ENCODE measurements at regions of chrX and their contacts with region 1.

Region 1: GRCh38 chrX:24259544-24260240 is 54.2 kb downstream of the SUPT20HL2 start:
- DNase-seq: no peak
- ATAC-seq: no peak
- H3K4me3 Mint-ChIP-seq: no peak overlapping the region
- H3K27ac Mint-ChIP-seq: no peak overlapping the region
- H3K4me1 Mint-ChIP-seq: peaks cover 8% of the 10 kb centered on the region
- H3K27me3 Mint-ChIP-seq: no peaks in the 10 kb centered on the region
- CTCF ChIP-seq: no peak

Region 2: GRCh38 chrX:23656684-23657083 is 603.0 kb before region 1 on chrX:
- CTCF ChIA-PET with region 1: no interaction called
- POLR2A ChIA-PET with region 1: no interaction called
- intact Hi-C with region 1: no loop called
- DNase-seq: no peak
- ATAC-seq: no peak
- H3K4me3 Mint-ChIP-seq: no peak overlapping the region
- H3K27ac Mint-ChIP-seq: no peak overlapping the region
- H3K4me1 Mint-ChIP-seq: peaks cover 21% of the 10 kb centered on the region
- H3K27me3 Mint-ChIP-seq: no peaks in the 10 kb centered on the region
- CTCF ChIP-seq: no peak

Region 3: GRCh38 chrX:24245201-24245600 is 14.5 kb before region 1 on chrX:
- CTCF ChIA-PET with region 1: no interaction called
- POLR2A ChIA-PET with region 1: no interaction called
- intact Hi-C with region 1: no loop called
- DNase-seq: no peak
- ATAC-seq: no peak
- H3K4me3 Mint-ChIP-seq: no peak overlapping the region
- H3K27ac Mint-ChIP-seq: no peak overlapping the region
- H3K4me1 Mint-ChIP-seq: peaks cover 15% of the 10 kb centered on the region
- H3K27me3 Mint-ChIP-seq: no peaks in the 10 kb centered on the region
- CTCF ChIP-seq: no peak

Region 4: GRCh38 chrX:24371391-24371972 is 111.8 kb after region 1 on chrX:
- CTCF ChIA-PET with region 1: interaction called, 5 read pairs
- POLR2A ChIA-PET with region 1: no interaction called
- intact Hi-C with region 1: loop called (anchors 5 kb)
- DNase-seq: peak; percentile 15
- ATAC-seq: peak; percentile 66
- H3K4me3 Mint-ChIP-seq: peak overlapping the region; percentile 24
- H3K27ac Mint-ChIP-seq: no peak overlapping the region
- H3K4me1 Mint-ChIP-seq: peaks cover 7% of the 10 kb centered on the region
- H3K27me3 Mint-ChIP-seq: peaks cover 10% of the 10 kb centered on the region
- CTCF ChIP-seq: no peak